Activated CD8-positive, alpha-beta T cell treated with anti-CD3 and anti-CD28 coated beads for 36 hours (primary cell): ENCODE measurements at regions of chr16 and their contacts with region 1.

Region 1: DNA sequence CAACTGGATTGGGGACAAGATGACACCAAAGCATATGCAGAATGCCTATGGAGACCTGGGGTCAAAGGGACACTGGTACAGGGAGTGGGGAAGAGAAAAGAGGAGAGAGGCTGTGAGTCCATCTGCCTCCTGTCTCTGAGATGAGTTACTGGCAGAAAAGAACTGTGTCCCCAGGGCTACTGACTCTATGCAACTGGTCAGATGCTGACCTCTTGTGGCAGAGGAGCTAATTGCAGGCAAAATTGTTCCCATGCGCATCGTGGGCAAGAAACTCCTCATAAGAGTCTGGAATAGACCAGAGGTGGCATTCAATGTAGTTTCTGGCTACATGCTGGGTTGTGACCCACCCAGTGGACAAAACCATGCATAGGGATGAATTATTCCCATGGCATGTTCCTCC is 26.1 kb upstream of the MLKL start:
- DNase-seq: peak; percentile 70
- ATAC-seq: peak; percentile 45
- H3K4me3 Mint-ChIP-seq: no peak overlapping the region
- H3K27ac Mint-ChIP-seq: no peak overlapping the region
- H3K4me1 Mint-ChIP-seq: peaks cover 7% of the 10 kb centered on the region
- H3K27me3 Mint-ChIP-seq: no peaks in the 10 kb centered on the region
- CTCF ChIP-seq: peak; percentile 66

Region 2: GRCh38 chr16:74695450-74696422 is 31.0 kb before region 1 on chr16:
- CTCF ChIA-PET with region 1: interaction called, 17 read pairs
- POLR2A ChIA-PET with region 1: no interaction called
- intact Hi-C with region 1: no loop called
- DNase-seq: peak; percentile 82
- ATAC-seq: peak; percentile 82
- H3K4me3 Mint-ChIP-seq: peak overlapping the region; percentile 64
- H3K27ac Mint-ChIP-seq: no peak overlapping the region
- H3K4me1 Mint-ChIP-seq: peaks cover 34% of the 10 kb centered on the region
- H3K27me3 Mint-ChIP-seq: no peaks in the 10 kb centered on the region
- CTCF ChIP-seq: no peak

Region 3: GRCh38 chr16:74738134-74738541 is 11.4 kb after region 1 on chr16:
- CTCF ChIA-PET with region 1: interaction called, 21 read pairs
- POLR2A ChIA-PET with region 1: no interaction called
- intact Hi-C with region 1: no loop called
- DNase-seq: no peak
- ATAC-seq: no peak
- H3K4me3 Mint-ChIP-seq: no peak overlapping the region
- H3K27ac Mint-ChIP-seq: no peak overlapping the region
- H3K4me1 Mint-ChIP-seq: no peaks in the 10 kb centered on the region
- H3K27me3 Mint-ChIP-seq: no peaks in the 10 kb centered on the region
- CTCF ChIP-seq: no peak